Common myeloid progenitor, CD34-positive (primary cell): ENCODE measurements at regions of chr1 and their contacts with region 1.

Region 1: DNA sequence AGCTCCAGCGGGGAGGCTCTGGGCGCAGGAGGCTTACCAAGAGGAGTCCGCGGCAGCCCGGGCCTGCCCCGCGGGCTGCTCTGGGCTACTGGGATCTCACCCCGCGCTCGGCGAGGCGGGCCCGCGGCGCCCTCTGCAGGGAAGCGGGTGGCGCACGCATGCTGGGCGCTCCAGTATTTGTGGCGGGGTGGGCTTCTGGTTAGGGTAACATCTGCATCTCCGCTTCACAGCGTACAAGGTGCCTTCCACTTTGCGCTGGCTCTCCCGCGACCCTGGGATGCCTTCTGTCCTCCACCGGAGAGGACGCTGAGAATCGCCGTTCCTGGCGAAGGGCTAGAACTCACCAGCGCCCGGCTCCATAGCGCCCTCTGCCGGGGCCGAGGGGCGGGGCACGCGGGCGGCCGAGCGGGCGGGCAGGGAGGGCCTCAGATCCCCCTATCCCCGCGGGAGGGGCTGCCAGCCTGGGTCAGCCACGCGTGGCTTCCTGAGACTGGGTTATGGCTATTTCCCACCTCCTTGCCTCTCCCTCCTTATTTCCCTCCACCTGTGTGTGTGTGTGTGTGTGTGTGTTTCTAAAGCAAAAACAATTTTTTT is 46.6 kb upstream of the CTBS start:
- DNase-seq: peak; percentile 79 to 89 (median 86)
- H3K4me3 ChIP-seq: peak overlapping the region; percentile 53 to 91 (median 71)
- H3K27ac ChIP-seq: peak overlapping the region in 1 of 2 experiments; percentile 54
- H3K4me1 ChIP-seq: peaks cover 0 to 6% (median 2%) of the 10 kb centered on the region in 4 experiments
- H3K27me3 ChIP-seq: no peaks in the 10 kb centered on the region

Region 2: GRCh38 chr1:84603941-84604830 is 16.6 kb before region 1 on chr1:
- CTCF ChIA-PET with region 1: interaction called, 26 read pairs
- POLR2A ChIA-PET with region 1: no interaction called
- DNase-seq: no peak
- H3K4me3 ChIP-seq: no peak overlapping the region
- H3K27ac ChIP-seq: no peak overlapping the region
- H3K4me1 ChIP-seq: no peaks in the 10 kb centered on the region
- H3K27me3 ChIP-seq: no peaks in the 10 kb centered on the region

Region 3: GRCh38 chr1:84785271-84786036 is 164.6 kb after region 1 on chr1:
- CTCF ChIA-PET with region 1: no interaction called
- POLR2A ChIA-PET with region 1: no interaction called
- DNase-seq: no peak
- H3K4me3 ChIP-seq: no peak overlapping the region
- H3K27ac ChIP-seq: no peak overlapping the region
- H3K4me1 ChIP-seq: peaks cover under 1 to 14% (median 4%) of the 10 kb centered on the region in 4 experiments
- H3K27me3 ChIP-seq: no peaks in the 10 kb centered on the region